Adrenal gland (tissue), 19 donors: ENCODE measurements at regions of chr4 and their contacts with region 1.

Region 1: DNA sequence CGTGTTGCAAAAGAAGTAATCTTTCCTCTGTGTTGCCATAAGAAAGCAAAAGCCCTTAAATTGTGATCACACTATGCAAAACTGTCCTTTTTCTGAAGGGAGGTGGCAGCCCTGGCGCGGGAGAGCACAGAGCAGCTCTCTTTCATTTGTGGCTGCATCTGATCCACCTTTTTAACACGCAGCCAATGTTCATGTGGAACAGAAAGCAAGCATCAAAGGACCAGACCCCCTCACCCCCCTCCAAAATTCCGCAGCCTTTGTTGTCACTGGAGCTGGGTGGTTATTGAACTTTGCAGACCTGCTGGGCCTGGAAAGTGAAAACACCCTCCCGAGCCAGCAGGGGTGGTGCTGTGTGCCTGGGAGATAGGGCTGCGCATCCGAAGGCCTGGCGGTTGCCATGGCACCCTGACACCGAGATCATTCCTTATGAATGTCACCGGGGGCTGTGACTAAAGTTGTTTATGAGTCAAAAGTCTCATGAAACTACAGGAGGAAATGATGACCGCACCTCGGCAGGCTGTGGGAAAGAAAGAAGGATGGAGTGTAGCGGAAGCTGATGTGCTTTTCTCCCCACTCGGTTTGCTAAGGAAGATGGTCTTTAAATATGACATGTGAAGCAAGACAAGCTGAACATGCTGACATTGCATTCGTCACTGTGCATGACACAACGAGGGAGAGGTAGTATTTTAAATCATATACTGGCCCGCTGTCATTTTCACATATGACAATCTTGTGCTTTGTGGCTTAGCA is 367.4 kb downstream of the UNC5C start:
- DNase-seq: peak in 6 of 7 donors; percentile 24 to 85 (median 44)
- H3K4me3 ChIP-seq: no peak overlapping the region
- H3K27ac ChIP-seq: peak overlapping the region in 1 of 5 donors; percentile 66
- H3K4me1 ChIP-seq: peaks cover 0 to 9% of the 10 kb centered on the region in 2 donors
- H3K27me3 ChIP-seq: no peaks in the 10 kb centered on the region
- CTCF ChIP-seq: peak in 2 of 6 experiments; percentile 20 to 29
- POLR2A ChIP-seq: no peak

Region 2: DNA sequence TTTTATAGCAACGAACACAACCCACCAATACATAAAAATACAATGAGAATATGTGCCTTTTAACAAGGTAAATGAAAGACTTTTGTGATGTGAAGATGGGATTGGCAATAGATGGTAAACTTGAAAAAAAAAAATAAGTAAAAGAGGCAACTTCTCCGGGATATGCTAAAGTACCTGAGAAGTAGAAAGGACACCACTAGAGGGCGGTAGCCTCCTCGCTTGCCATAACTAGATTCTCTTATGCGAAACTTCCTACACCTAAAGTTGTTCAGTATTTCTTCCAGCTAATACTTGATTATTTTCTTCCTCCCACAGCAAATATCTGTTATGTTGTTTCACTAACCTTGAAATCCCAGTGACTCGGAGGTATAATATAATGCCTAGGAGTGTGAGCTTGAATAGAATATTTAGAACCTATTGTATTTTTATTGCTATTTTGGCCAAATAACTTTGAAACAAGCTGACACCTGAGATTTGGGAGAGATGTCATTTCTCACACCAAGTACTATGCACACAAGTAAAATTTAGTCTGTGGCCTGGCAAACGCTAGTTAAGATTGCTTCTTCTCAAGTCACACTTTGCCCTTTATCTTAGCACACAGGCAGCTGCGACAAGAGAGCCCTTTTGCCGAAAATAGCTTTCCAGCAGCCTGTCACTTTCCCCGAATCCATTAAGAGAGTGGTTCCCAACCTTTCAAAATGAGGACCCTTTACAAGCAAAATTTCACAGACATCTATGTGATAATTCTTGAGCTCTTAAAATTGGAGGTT is 774.6 kb before region 1 on chr4:
- intact Hi-C with region 1: no loop called
- DNase-seq: peak; percentile 63 to 94 (median 83)
- H3K4me3 ChIP-seq: no peak overlapping the region
- H3K27ac ChIP-seq: no peak overlapping the region
- H3K4me1 ChIP-seq: peaks cover 0 to 23% of the 10 kb centered on the region in 2 donors
- H3K27me3 ChIP-seq: no peaks in the 10 kb centered on the region
- CTCF ChIP-seq: peak; percentile 73 to 97 (median 84)
- POLR2A ChIP-seq: no peak

Region 3: GRCh38 chr4:95549246-95550114 is 368.1 kb after region 1 on chr4:
- intact Hi-C with region 1: loop called in 1 of 2 experiments (anchors 10 kb)
- DNase-seq: peak in 5 of 7 donors; percentile 65 to 88 (median 76)
- H3K4me3 ChIP-seq: peak overlapping the region in 3 of 4 donors; percentile 36 to 67 (median 61)
- H3K27ac ChIP-seq: peak overlapping the region; percentile 43 to 93 (median 87)
- H3K4me1 ChIP-seq: no peaks in the 10 kb centered on the region
- H3K27me3 ChIP-seq: no peaks in the 10 kb centered on the region
- CTCF ChIP-seq: peak in 1 of 6 experiments; percentile 2
- POLR2A ChIP-seq: peak; percentile 26 to 68